ENCODE measurements at regions of chr7 and their contacts with region 1.

Region 1: DNA sequence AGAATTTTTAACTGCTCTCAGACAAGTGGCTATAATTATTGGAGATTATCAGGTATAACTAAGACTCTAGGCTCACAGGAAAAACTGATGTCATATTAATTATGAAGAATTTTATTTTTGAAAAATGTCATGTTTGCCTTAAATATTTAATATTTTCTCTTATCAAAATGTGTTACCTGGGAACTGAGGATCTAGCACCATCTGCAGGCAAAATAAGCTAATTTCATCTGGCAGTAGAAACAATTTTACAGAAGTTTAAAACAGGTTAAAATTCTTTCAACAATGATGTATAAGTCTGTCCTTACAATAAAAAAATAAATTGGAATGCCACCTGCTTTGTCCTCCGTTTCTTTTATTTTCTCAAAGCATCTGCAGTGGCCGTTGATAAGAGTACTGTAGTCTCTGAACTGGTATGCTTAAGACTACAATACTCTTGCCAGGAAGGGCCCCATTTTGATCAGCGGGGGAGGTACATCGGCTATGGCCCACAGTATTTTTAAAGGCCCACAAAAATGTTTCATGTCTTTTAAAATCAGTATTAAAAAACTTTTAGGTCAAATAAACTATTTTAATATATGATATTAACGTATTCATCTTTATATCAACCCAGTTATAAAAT is 81.3 kb downstream of the VWDE start:
- DNase-seq: peak in 4 of 14 experiments; percentile 33 to 65 (median 56)
- ATAC-seq: no peak
- H3K4me3 ChIP-seq: no peak overlapping the region
- H3K4me3 Mint-ChIP-seq: no peak overlapping the region
- H3K27ac ChIP-seq: no peak overlapping the region
- H3K27ac Mint-ChIP-seq: no peak overlapping the region
- H3K4me1 ChIP-seq: no peaks in the 10 kb centered on the region
- H3K4me1 Mint-ChIP-seq: no peaks in the 10 kb centered on the region
- H3K27me3 ChIP-seq: no peaks in the 10 kb centered on the region
- H3K27me3 Mint-ChIP-seq: no peaks in the 10 kb centered on the region
- CTCF ChIP-seq: peak; percentile 86

Region 2: DNA sequence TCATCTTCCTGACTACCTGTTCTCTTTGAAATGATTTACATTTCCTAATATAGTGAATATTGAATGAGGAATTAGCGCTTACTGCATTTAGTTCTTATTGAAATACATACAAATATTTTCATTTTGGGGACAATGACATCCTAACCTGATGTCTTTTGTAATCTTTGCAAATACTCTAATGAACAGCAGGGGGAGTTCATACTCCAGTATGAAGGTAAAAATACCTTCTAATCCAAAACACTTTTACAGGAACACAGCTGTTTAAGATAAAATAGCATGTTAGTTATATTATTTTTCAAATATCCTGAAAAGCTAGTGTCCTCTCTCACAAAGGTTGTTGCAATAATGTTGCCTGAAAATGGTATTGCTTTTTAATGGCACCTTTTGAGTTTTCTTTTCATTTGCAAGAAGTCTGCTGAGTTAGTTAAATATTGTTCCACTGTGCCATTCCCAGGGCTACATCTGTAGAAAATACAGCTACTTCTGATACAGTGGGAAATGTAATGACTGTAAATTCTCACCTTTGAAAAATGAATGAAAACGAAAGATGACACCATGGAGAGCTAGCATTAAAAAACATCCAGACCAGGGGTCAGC is 948.7 kb before region 1 on chr7:
- CTCF ChIA-PET with region 1: interaction called, 3 read pairs
- POLR2A ChIA-PET with region 1: no interaction called
- intact Hi-C with region 1: loop called (anchors 5 kb)
- DNase-seq: no peak
- ATAC-seq: no peak
- H3K4me3 ChIP-seq: no peak overlapping the region
- H3K4me3 Mint-ChIP-seq: no peak overlapping the region
- H3K27ac ChIP-seq: no peak overlapping the region
- H3K27ac Mint-ChIP-seq: no peak overlapping the region
- H3K4me1 ChIP-seq: no peaks in the 10 kb centered on the region
- H3K4me1 Mint-ChIP-seq: no peaks in the 10 kb centered on the region
- H3K27me3 ChIP-seq: no peaks in the 10 kb centered on the region
- H3K27me3 Mint-ChIP-seq: no peaks in the 10 kb centered on the region
- CTCF ChIP-seq: peak; percentile 32

Region 3: DNA sequence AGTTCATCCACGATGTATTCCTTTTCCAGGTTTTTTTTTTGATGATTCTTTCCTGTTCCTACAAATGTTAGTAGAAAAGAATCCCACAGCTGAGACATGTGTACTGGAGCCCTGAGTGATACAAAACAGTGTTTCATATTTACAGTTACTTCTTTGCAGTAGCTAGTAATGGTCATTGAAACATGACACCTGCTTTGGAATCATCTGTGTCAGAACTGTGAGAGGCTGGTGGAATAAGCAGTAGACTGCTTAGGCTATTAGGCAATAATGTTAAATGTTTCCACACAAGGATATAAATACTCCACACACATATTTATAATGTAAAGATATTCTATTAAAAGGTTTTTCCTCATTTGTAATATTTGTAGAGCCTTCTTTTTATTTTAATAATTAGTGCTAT is 884.4 kb before region 1 on chr7:
- CTCF ChIA-PET with region 1: no interaction called
- POLR2A ChIA-PET with region 1: no interaction called
- intact Hi-C with region 1: loop called in 1 of 2 experiments (anchors 5 kb)
- DNase-seq: no peak
- ATAC-seq: no peak
- H3K4me3 ChIP-seq: no peak overlapping the region
- H3K4me3 Mint-ChIP-seq: no peak overlapping the region
- H3K27ac ChIP-seq: no peak overlapping the region
- H3K27ac Mint-ChIP-seq: no peak overlapping the region
- H3K4me1 ChIP-seq: no peaks in the 10 kb centered on the region
- H3K4me1 Mint-ChIP-seq: no peaks in the 10 kb centered on the region
- H3K27me3 ChIP-seq: no peaks in the 10 kb centered on the region
- H3K27me3 Mint-ChIP-seq: no peaks in the 10 kb centered on the region
- CTCF ChIP-seq: no peak

Region 4: GRCh38 chr7:12067141-12067831 is 255.1 kb before region 1 on chr7:
- CTCF ChIA-PET with region 1: interaction called, 7 read pairs
- POLR2A ChIA-PET with region 1: interaction called, 6 read pairs
- intact Hi-C with region 1: loop called (anchors 1 kb)
- DNase-seq: peak; percentile 23 to 79 (median 46)
- ATAC-seq: peak; percentile 64
- H3K4me3 ChIP-seq: no peak overlapping the region
- H3K4me3 Mint-ChIP-seq: no peak overlapping the region
- H3K27ac ChIP-seq: no peak overlapping the region
- H3K27ac Mint-ChIP-seq: no peak overlapping the region
- H3K4me1 ChIP-seq: no peaks in the 10 kb centered on the region
- H3K4me1 Mint-ChIP-seq: no peaks in the 10 kb centered on the region
- H3K27me3 ChIP-seq: no peaks in the 10 kb centered on the region
- H3K27me3 Mint-ChIP-seq: no peaks in the 10 kb centered on the region
- CTCF ChIP-seq: peak; percentile 79

Region 5: DNA sequence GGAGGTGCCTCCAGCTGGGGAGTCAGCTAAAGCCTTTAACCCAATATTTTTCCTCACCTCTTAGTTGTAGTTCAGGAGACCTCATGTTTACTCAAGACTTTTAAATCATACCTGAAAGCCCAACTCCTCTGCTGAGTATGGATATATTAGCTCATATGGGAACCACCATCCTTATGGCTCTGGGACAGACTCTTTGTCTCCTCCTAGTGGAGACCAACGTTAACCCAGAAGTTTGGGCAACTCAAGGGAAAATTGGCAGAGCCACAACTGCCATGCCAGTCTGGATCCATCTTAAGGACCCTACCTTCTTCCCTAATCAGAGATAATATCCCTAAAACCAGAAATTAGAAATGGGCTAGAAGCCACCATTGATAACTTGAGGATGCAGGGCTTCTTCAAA is 30.5 kb before region 1 on chr7:
- CTCF ChIA-PET with region 1: no interaction called
- POLR2A ChIA-PET with region 1: no interaction called
- intact Hi-C with region 1: no loop called
- DNase-seq: peak in 4 of 14 experiments; percentile 6 to 40 (median 18)
- ATAC-seq: no peak
- H3K4me3 ChIP-seq: no peak overlapping the region
- H3K4me3 Mint-ChIP-seq: no peak overlapping the region
- H3K27ac ChIP-seq: no peak overlapping the region
- H3K27ac Mint-ChIP-seq: no peak overlapping the region
- H3K4me1 ChIP-seq: no peaks in the 10 kb centered on the region
- H3K4me1 Mint-ChIP-seq: no peaks in the 10 kb centered on the region
- H3K27me3 ChIP-seq: no peaks in the 10 kb centered on the region
- H3K27me3 Mint-ChIP-seq: peaks cover 5% of the 10 kb centered on the region
- CTCF ChIP-seq: peak; percentile 17

Region 6: DNA sequence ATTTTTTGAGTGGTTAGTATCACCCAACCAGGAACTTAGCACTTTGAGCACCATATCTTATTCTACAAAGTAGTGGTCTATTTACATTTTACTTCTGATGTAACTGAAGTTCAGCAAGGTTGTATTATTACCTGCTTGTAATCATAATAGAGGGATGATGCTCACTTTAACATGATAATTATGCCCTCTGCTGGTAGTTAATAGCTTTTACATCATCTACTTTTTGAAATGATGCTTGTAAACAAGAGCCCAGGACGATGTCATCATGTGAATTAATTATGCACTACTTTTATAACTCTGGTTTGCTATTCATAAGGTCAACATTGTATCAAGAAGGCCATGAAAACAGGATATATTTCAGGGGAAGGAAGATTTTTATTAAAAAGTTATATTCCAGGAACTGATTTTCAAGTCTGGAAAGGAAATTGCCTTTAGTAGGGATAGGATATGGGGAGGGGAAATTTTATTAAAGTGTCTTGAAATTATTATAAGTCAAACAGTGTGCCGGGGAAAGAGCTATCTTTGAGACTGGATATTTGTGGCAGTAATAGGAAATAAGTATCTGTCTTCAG is 167.8 kb after region 1 on chr7:
- CTCF ChIA-PET with region 1: interaction called, 3 read pairs
- POLR2A ChIA-PET with region 1: no interaction called
- intact Hi-C with region 1: loop called (anchors 5 to 10 kb)
- DNase-seq: peak in 3 of 14 experiments; percentile 39 to 43 (median 43)
- ATAC-seq: peak; percentile 49
- H3K4me3 ChIP-seq: no peak overlapping the region
- H3K4me3 Mint-ChIP-seq: no peak overlapping the region
- H3K27ac ChIP-seq: no peak overlapping the region
- H3K27ac Mint-ChIP-seq: no peak overlapping the region
- H3K4me1 ChIP-seq: no peaks in the 10 kb centered on the region
- H3K4me1 Mint-ChIP-seq: no peaks in the 10 kb centered on the region
- H3K27me3 ChIP-seq: no peaks in the 10 kb centered on the region
- H3K27me3 Mint-ChIP-seq: peaks cover 4% of the 10 kb centered on the region
- CTCF ChIP-seq: peak; percentile 59